Heart left ventricle (tissue), 16 donors: ENCODE measurements at regions of chr3 and their contacts with region 1.

Region 1: DNA sequence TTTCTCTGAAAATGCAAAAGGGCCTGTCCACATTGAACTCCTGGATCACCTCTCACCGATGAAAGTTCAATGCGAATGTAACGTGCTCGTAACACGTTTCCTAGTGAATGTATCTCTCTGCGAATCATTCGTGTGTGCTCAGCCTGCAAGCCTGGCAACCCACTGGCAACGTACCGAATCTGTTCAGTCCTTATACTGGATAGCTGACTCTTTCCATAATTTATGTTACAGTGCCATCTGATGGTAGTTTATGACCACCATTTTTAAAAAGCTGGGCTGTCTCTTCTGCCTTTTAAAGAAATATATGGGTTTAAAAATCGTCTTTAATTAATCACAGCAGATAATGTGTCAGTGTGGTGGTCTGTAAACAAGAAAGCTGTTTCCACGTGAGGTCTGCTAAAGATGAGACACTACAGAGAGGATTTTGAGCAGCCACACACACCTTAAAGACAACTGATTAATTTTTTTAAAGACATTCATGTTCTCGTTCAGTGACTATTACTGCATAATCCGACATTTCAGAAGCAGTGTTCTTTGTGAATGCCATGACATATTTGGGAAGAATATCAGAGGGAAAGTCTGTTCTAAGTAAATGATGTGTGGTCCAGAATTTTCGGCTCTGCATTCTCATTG is 69.4 kb upstream of the FOXP1 start:
- DNase-seq: peak in 2 of 5 donors; percentile 24 to 48
- ATAC-seq: peak in 3 of 4 donors; percentile 67 to 79 (median 79)
- H3K4me3 ChIP-seq: no peak overlapping the region
- H3K27ac ChIP-seq: peak overlapping the region in 1 of 12 donors; percentile 13
- H3K4me1 ChIP-seq: peaks cover 0 to 8% (median 1%) of the 10 kb centered on the region in 12 donors
- H3K27me3 ChIP-seq: no peaks in the 10 kb centered on the region
- CTCF ChIP-seq: peak; percentile 21 to 68 (median 50)
- POLR2A ChIP-seq: no peak

Region 2: GRCh38 chr3:70064194-70064779 is 1588.6 kb before region 1 on chr3:
- intact Hi-C with region 1: loop called in 6 of 10 experiments (anchors 5 to 10 kb)
- DNase-seq: peak in 1 of 5 donors; percentile 10
- ATAC-seq: no peak
- H3K4me3 ChIP-seq: no peak overlapping the region
- H3K27ac ChIP-seq: no peak overlapping the region
- H3K4me1 ChIP-seq: peaks cover 0 to 10% (median 1%) of the 10 kb centered on the region in 12 donors
- H3K27me3 ChIP-seq: peaks cover 0 to 9% (median 0%) of the 10 kb centered on the region in 9 donors
- CTCF ChIP-seq: peak; percentile 46 to 76 (median 60)
- POLR2A ChIP-seq: no peak

Region 3: DNA sequence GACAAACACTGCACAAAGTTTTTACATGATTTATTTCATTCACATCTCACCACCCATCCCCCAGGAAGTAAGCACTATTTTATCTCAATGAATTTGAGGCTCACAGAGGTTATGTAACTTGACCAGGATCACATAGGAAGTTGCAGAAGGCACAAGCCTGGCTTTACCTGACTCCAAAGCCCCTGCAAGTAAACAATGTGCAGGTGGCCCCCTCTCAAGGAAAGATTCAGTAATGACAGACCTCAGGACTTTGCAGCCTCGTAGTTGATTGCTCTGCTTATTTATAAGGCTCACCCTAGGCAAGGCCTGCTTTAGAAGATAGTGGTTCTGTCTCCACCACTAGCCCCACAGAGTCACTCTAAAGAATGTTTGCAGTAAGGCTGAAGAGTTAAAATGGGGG is 1260.7 kb before region 1 on chr3:
- intact Hi-C with region 1: loop called in 1 of 10 experiments (anchors 10 kb)
- DNase-seq: no peak
- ATAC-seq: no peak
- H3K4me3 ChIP-seq: no peak overlapping the region
- H3K27ac ChIP-seq: no peak overlapping the region
- H3K4me1 ChIP-seq: no peaks in the 10 kb centered on the region
- H3K27me3 ChIP-seq: no peaks in the 10 kb centered on the region
- CTCF ChIP-seq: no peak
- POLR2A ChIP-seq: no peak

Region 4: GRCh38 chr3:70531063-70531657 is 1121.7 kb before region 1 on chr3:
- intact Hi-C with region 1: loop called in 5 of 10 experiments (anchors 5 to 10 kb)
- DNase-seq: no peak
- ATAC-seq: no peak
- H3K4me3 ChIP-seq: no peak overlapping the region
- H3K27ac ChIP-seq: no peak overlapping the region
- H3K4me1 ChIP-seq: no peaks in the 10 kb centered on the region
- H3K27me3 ChIP-seq: peaks cover 0 to 5% (median 0%) of the 10 kb centered on the region in 9 donors
- CTCF ChIP-seq: peak in 11 of 12 donors; percentile 26 to 71 (median 52)
- POLR2A ChIP-seq: no peak

Region 5: GRCh38 chr3:70550723-70551319 is 1102.1 kb before region 1 on chr3:
- intact Hi-C with region 1: loop called in 4 of 10 experiments (anchors 2 to 5 kb)
- DNase-seq: peak; percentile 55 to 79 (median 66)
- ATAC-seq: peak in 3 of 4 donors; percentile 85 to 87 (median 85)
- H3K4me3 ChIP-seq: no peak overlapping the region
- H3K27ac ChIP-seq: no peak overlapping the region
- H3K4me1 ChIP-seq: no peaks in the 10 kb centered on the region
- H3K27me3 ChIP-seq: no peaks in the 10 kb centered on the region
- CTCF ChIP-seq: peak; percentile 67 to 88 (median 78)
- POLR2A ChIP-seq: no peak